ENCODE measurements at regions of chr6 and their contacts with region 1.

Region 1: GRCh38 chr6:167722634-167723309 is 103.9 kb upstream of the AFDN start:
- DNase-seq: no peak
- ATAC-seq: no peak
- H3K4me3 ChIP-seq: no peak overlapping the region
- H3K4me3 Mint-ChIP-seq: no peak overlapping the region
- H3K27ac ChIP-seq: no peak overlapping the region
- H3K27ac Mint-ChIP-seq: no peak overlapping the region
- H3K4me1 ChIP-seq: no peaks in the 10 kb centered on the region
- H3K4me1 Mint-ChIP-seq: no peaks in the 10 kb centered on the region
- H3K27me3 ChIP-seq: peaks cover 8 to 15% of the 10 kb centered on the region in 2 experiments
- H3K27me3 Mint-ChIP-seq: peaks cover 60% of the 10 kb centered on the region
- CTCF ChIP-seq: no peak

Region 2: GRCh38 chr6:167680605-167681149 is 42.1 kb before region 1 on chr6:
- CTCF ChIA-PET with region 1: no interaction called
- POLR2A ChIA-PET with region 1: no interaction called
- intact Hi-C with region 1: loop called in 1 of 2 experiments (anchors 1 kb)
- DNase-seq: no peak
- ATAC-seq: no peak
- H3K4me3 ChIP-seq: no peak overlapping the region
- H3K4me3 Mint-ChIP-seq: no peak overlapping the region
- H3K27ac ChIP-seq: no peak overlapping the region
- H3K27ac Mint-ChIP-seq: no peak overlapping the region
- H3K4me1 ChIP-seq: peaks cover 9% of the 10 kb centered on the region
- H3K4me1 Mint-ChIP-seq: no peaks in the 10 kb centered on the region
- H3K27me3 ChIP-seq: peaks cover 61 to 66% of the 10 kb centered on the region in 2 experiments
- H3K27me3 Mint-ChIP-seq: peaks cover 93% of the 10 kb centered on the region
- CTCF ChIP-seq: no peak

Measured in CD4-positive, alpha-beta T cell (primary cell).